Activated CD4-positive, alpha-beta T cell treated with anti-CD3 and anti-CD28 coated beads for 36 hours (primary cell): ENCODE measurements at regions of chr7 and their contacts with region 1.

Region 1: DNA sequence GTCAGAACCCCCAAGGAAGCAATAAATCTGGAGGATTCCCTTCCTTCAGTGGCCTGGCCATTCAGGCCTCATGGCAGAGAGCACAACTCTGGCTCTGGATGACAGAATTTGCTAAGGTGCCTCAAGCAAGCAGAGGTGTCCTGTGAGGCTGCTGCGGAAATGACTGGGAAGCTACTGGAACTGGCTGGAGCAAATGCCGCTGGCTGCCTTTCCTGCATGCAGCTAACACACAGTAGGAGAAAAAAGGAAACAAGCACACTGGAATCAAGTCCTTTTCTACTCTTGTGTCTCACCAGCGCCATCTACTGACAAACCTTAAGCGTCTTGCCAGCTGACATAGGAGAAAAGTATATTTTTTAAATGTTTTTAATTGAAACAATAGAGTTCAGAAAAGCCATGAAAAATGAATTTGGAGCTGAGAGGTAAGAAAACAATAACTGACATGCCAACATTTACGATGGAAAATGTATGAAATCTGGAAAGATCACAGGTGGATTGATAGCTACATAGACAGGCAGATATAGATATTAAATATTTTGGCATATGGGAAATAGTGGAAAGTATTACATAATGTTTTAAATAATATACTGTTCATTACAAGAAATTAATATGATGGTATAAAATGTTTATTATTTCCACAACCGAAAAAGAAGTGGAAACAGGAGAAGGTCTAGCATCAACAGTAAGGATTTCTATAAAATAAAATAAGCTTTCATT is 951.6 kb downstream of the ANKRD7 start:
- DNase-seq: peak; percentile 55
- ATAC-seq: no peak
- H3K4me3 Mint-ChIP-seq: no peak overlapping the region
- H3K27ac Mint-ChIP-seq: no peak overlapping the region
- H3K4me1 Mint-ChIP-seq: no peaks in the 10 kb centered on the region
- H3K27me3 Mint-ChIP-seq: no peaks in the 10 kb centered on the region

Region 2: GRCh38 chr7:118250860-118251494 is 925.1 kb before region 1 on chr7:
- CTCF ChIA-PET with region 1: no interaction called
- POLR2A ChIA-PET with region 1: no interaction called
- intact Hi-C with region 1: loop called in 1 of 2 experiments (anchors 10 kb)
- DNase-seq: no peak
- ATAC-seq: no peak
- H3K4me3 Mint-ChIP-seq: no peak overlapping the region
- H3K27ac Mint-ChIP-seq: no peak overlapping the region
- H3K4me1 Mint-ChIP-seq: no peaks in the 10 kb centered on the region
- H3K27me3 Mint-ChIP-seq: peaks cover 18% of the 10 kb centered on the region

Region 3: GRCh38 chr7:118352854-118353453 is 823.1 kb before region 1 on chr7:
- CTCF ChIA-PET with region 1: no interaction called
- POLR2A ChIA-PET with region 1: no interaction called
- intact Hi-C with region 1: loop called in 1 of 2 experiments (anchors 2 kb)
- DNase-seq: no peak
- ATAC-seq: no peak
- H3K4me3 Mint-ChIP-seq: no peak overlapping the region
- H3K27ac Mint-ChIP-seq: no peak overlapping the region
- H3K4me1 Mint-ChIP-seq: no peaks in the 10 kb centered on the region
- H3K27me3 Mint-ChIP-seq: peaks cover 5% of the 10 kb centered on the region

Region 4: DNA sequence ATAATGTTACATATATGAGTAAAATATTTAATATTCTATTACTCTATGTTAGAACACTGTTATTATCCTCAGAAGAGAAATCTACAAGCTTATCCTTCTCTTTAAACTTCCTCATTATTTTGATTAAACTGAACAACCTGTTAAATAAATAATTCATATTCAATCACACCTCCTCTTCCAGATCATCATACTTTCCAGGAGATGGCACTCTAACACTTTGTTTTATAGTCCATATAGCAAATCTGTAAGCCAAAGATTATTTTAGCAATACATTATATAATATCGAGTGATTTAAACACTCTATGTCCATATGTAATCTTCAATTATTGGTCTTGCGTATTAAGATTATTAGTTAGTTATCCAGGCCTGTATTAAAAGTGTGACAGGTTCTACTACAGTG is 257.5 kb before region 1 on chr7:
- CTCF ChIA-PET with region 1: no interaction called
- POLR2A ChIA-PET with region 1: no interaction called
- intact Hi-C with region 1: loop called in 1 of 2 experiments (anchors 2 kb)
- DNase-seq: no peak
- ATAC-seq: no peak
- H3K4me3 Mint-ChIP-seq: no peak overlapping the region
- H3K27ac Mint-ChIP-seq: no peak overlapping the region
- H3K4me1 Mint-ChIP-seq: no peaks in the 10 kb centered on the region
- H3K27me3 Mint-ChIP-seq: no peaks in the 10 kb centered on the region